Activated CD8-positive, alpha-beta T cell treated with anti-CD3 and anti-CD28 coated beads, Interleukin-2, amount 10 ng/mL, durations not matched to agents 7 days and 5 days (primary cell): ENCODE measurements at regions of chr12 and their contacts with region 1.

Region 1: GRCh38 chr12:93766796-93767523 is 89.8 kb downstream of the CRADD start:
- DNase-seq: peak; percentile 68
- ATAC-seq: peak; percentile 82
- H3K4me3 Mint-ChIP-seq: no peak overlapping the region
- H3K27ac Mint-ChIP-seq: peak overlapping the region; percentile 40
- H3K4me1 Mint-ChIP-seq: peaks cover 41% of the 10 kb centered on the region
- H3K27me3 Mint-ChIP-seq: no peaks in the 10 kb centered on the region

Region 2: GRCh38 chr12:93502802-93503623 is 263.9 kb before region 1 on chr12:
- CTCF ChIA-PET with region 1: interaction called, 35 read pairs
- POLR2A ChIA-PET with region 1: no interaction called
- DNase-seq: peak; percentile 78
- ATAC-seq: no peak
- H3K4me3 Mint-ChIP-seq: no peak overlapping the region
- H3K27ac Mint-ChIP-seq: no peak overlapping the region
- H3K4me1 Mint-ChIP-seq: peaks cover 17% of the 10 kb centered on the region
- H3K27me3 Mint-ChIP-seq: no peaks in the 10 kb centered on the region

Region 3: GRCh38 chr12:93707836-93708235 is 59.1 kb before region 1 on chr12:
- CTCF ChIA-PET with region 1: no interaction called
- POLR2A ChIA-PET with region 1: no interaction called
- DNase-seq: no peak
- ATAC-seq: no peak
- H3K4me3 Mint-ChIP-seq: no peak overlapping the region
- H3K27ac Mint-ChIP-seq: no peak overlapping the region
- H3K4me1 Mint-ChIP-seq: no peaks in the 10 kb centered on the region
- H3K27me3 Mint-ChIP-seq: no peaks in the 10 kb centered on the region

Region 4: GRCh38 chr12:93778306-93778705 is 11.3 kb after region 1 on chr12:
- CTCF ChIA-PET with region 1: interaction called, 23 read pairs
- POLR2A ChIA-PET with region 1: no interaction called
- DNase-seq: no peak
- ATAC-seq: no peak
- H3K4me3 Mint-ChIP-seq: no peak overlapping the region
- H3K27ac Mint-ChIP-seq: no peak overlapping the region
- H3K4me1 Mint-ChIP-seq: peaks cover 13% of the 10 kb centered on the region
- H3K27me3 Mint-ChIP-seq: no peaks in the 10 kb centered on the region

Region 5: GRCh38 chr12:93802698-93803423 is 35.9 kb after region 1 on chr12:
- CTCF ChIA-PET with region 1: interaction called, 18 read pairs
- POLR2A ChIA-PET with region 1: no interaction called
- DNase-seq: no peak
- ATAC-seq: no peak
- H3K4me3 Mint-ChIP-seq: no peak overlapping the region
- H3K27ac Mint-ChIP-seq: no peak overlapping the region
- H3K4me1 Mint-ChIP-seq: peaks cover 15% of the 10 kb centered on the region
- H3K27me3 Mint-ChIP-seq: no peaks in the 10 kb centered on the region

Region 6: GRCh38 chr12:94074980-94075928 is 308.3 kb after region 1 on chr12:
- CTCF ChIA-PET with region 1: interaction called, 16 read pairs
- POLR2A ChIA-PET with region 1: no interaction called
- DNase-seq: no peak
- ATAC-seq: no peak
- H3K4me3 Mint-ChIP-seq: no peak overlapping the region
- H3K27ac Mint-ChIP-seq: no peak overlapping the region
- H3K4me1 Mint-ChIP-seq: peaks cover 16% of the 10 kb centered on the region
- H3K27me3 Mint-ChIP-seq: peaks cover 11% of the 10 kb centered on the region